ENCODE measurements at regions of chr16 and their contacts with region 1.

Region 1: DNA sequence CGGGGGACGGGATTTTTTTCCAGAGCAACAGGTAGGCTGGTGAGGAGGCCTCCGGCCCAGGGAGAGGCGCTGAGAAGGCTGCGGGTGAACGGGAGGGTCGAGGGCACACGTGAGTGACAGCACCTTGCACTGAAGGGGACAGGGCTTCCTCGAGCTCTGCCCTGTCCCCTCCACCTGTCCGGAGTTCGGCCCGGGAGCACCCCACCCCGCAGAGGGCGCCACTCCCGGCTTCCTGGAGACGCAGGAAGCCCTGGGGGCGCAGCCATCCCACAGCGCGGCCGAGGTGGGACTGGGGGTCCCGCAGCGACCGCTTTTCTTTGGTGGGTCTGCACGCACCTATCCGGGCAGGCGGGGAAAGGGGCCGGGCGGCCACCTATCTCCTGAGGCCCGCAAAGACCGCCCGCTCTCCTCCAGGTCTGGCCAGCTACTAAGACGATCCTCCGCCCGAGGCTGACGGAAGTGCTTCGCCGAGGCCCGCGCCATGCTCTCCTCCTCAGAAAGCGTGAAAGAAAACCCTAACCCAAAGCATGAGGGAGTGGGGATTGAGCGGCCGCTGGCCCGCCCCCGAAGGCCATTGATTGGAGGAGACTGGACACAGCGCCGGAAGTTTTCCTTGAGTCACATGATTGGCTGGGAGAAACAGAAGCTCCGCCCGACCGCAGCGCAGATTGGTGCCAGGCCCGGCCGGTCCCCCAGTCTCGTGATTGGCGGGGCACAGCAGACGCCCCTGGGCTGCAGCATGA is 34.3 kb downstream of the DDX19A start:
- DNase-seq: peak; percentile 99
- H3K4me3 Mint-ChIP-seq: peak overlapping the region; percentile 90
- H3K27ac Mint-ChIP-seq: peak overlapping the region; percentile 83
- H3K4me1 Mint-ChIP-seq: no peaks in the 10 kb centered on the region
- H3K27me3 Mint-ChIP-seq: no peaks in the 10 kb centered on the region
- CTCF ChIP-seq: peak; percentile 39

Region 2: DNA sequence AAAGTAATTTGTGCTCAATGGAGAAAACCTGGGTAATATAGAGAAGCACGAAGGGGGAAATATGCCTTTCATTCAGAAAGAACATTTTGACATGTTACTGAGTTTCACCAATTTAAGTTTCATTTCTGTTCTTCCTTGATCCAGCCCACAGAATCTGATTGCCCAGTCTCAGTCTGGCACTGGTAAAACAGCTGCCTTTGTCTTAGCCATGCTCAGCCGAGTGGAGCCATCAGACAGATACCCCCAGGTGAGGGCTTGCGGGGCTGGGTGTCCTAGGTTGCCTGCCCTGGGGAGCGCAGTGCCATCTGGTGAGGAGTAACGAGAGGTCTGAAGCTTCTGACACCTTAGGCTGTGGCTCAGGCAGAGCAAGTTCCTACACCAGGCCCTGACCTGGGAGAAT is 16.6 kb before region 1 on chr16:
- CTCF ChIA-PET with region 1: interaction called, 4 read pairs
- POLR2A ChIA-PET with region 1: interaction called, 11 read pairs
- intact Hi-C with region 1: no loop called
- DNase-seq: no peak
- H3K4me3 Mint-ChIP-seq: no peak overlapping the region
- H3K27ac Mint-ChIP-seq: no peak overlapping the region
- H3K4me1 Mint-ChIP-seq: no peaks in the 10 kb centered on the region
- H3K27me3 Mint-ChIP-seq: no peaks in the 10 kb centered on the region
- CTCF ChIP-seq: no peak

Region 3: GRCh38 chr16:70438969-70439862 is 58.2 kb after region 1 on chr16 and contains the start of gene ST3GAL2:
- CTCF ChIA-PET with region 1: interaction called, 3 read pairs
- POLR2A ChIA-PET with region 1: interaction called, 25 read pairs
- intact Hi-C with region 1: loop called (anchors 1 kb)
- DNase-seq: peak; percentile 94
- H3K4me3 Mint-ChIP-seq: peak within 1 kb of the TSS; percentile 76
- H3K27ac Mint-ChIP-seq: peak within 1 kb of the TSS; percentile 43
- H3K4me1 Mint-ChIP-seq: peaks cover 12% of the 10 kb centered on the region
- H3K27me3 Mint-ChIP-seq: no peaks in the 10 kb centered on the region
- CTCF ChIP-seq: peak; percentile 5
- total RNA-seq, gene ST3GAL2: 7.7 and 10.3 TPM in 2 replicates

Region 4: GRCh38 chr16:70470927-70471341 is 89.9 kb after region 1 on chr16:
- CTCF ChIA-PET with region 1: interaction called, 4 read pairs
- POLR2A ChIA-PET with region 1: interaction called, 16 read pairs
- intact Hi-C with region 1: loop called (anchors 2 kb)
- DNase-seq: peak; percentile 28
- H3K4me3 Mint-ChIP-seq: no peak overlapping the region
- H3K27ac Mint-ChIP-seq: no peak overlapping the region
- H3K4me1 Mint-ChIP-seq: peaks cover 5% of the 10 kb centered on the region
- H3K27me3 Mint-ChIP-seq: no peaks in the 10 kb centered on the region
- CTCF ChIP-seq: no peak

Region 5: GRCh38 chr16:70523076-70523742 is 142.2 kb after region 1 on chr16 and contains the start of gene COG4:
- CTCF ChIA-PET with region 1: interaction called, 3 read pairs
- POLR2A ChIA-PET with region 1: interaction called, 26 read pairs
- intact Hi-C with region 1: loop called (anchors 2 kb)
- DNase-seq: peak; percentile 87
- H3K4me3 Mint-ChIP-seq: peak within 1 kb of the TSS; percentile 98
- H3K27ac Mint-ChIP-seq: peak within 1 kb of the TSS; percentile 97
- H3K4me1 Mint-ChIP-seq: peaks cover 20% of the 10 kb centered on the region
- H3K27me3 Mint-ChIP-seq: no peaks in the 10 kb centered on the region
- CTCF ChIP-seq: no peak
- total RNA-seq, gene COG4: 62.2 and 64.9 TPM in 2 replicates